ENCODE measurements at regions of chr14 and their contacts with region 1.

Region 1: GRCh38 chr14:90697577-90698206 is 118.5 kb downstream of the TTC7B start:
- DNase-seq: peak; percentile 91
- ATAC-seq: peak; percentile 92

Region 2: GRCh38 chr14:89598548-89599186 is 1099.0 kb before region 1 on chr14:
- intact Hi-C with region 1: no loop called
- DNase-seq: no peak
- ATAC-seq: no peak

Region 3: GRCh38 chr14:90301668-90302090 is 396.0 kb before region 1 on chr14:
- intact Hi-C with region 1: loop called (anchors 5 kb)
- DNase-seq: no peak
- ATAC-seq: peak; percentile 58

Region 4: DNA sequence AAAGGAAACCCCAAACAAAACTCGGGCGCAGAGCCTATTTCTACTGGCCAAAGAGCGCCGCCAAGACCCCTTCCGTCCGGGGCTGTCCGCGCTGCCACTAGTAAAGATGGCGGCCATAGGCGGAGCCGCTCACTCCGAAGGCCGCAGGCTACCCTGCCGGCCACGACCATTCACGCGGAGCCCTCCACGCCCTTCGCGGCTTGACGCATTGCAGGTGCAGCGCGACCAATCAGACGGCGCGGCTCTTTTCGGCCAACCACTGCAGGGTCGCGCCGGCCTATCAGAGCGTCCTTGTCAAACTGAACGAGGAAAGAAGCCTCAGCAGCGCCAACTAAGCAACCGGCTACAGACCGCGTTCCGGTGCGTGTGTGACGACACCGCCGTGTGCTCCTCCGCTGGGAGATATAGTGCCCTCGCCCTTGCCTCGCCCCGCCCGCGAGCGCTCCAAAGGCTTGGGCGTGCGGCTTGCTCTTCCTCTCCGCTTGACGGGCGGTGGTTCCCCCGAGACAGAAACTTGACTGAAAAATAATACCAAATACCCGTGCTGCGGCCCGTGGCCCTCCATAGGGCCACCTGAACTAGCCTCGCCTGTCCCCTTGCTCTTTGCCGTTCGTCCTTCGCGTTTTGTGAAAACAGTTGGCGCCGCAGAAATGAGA is 314.5 kb before region 1 on chr14:
- intact Hi-C with region 1: loop called (anchors 5 kb)
- DNase-seq: peak; percentile 100
- ATAC-seq: peak; percentile 95

Region 5: GRCh38 chr14:90518941-90519256 is 178.8 kb before region 1 on chr14:
- intact Hi-C with region 1: loop called (anchors 5 kb)
- DNase-seq: no peak
- ATAC-seq: no peak

Region 6: DNA sequence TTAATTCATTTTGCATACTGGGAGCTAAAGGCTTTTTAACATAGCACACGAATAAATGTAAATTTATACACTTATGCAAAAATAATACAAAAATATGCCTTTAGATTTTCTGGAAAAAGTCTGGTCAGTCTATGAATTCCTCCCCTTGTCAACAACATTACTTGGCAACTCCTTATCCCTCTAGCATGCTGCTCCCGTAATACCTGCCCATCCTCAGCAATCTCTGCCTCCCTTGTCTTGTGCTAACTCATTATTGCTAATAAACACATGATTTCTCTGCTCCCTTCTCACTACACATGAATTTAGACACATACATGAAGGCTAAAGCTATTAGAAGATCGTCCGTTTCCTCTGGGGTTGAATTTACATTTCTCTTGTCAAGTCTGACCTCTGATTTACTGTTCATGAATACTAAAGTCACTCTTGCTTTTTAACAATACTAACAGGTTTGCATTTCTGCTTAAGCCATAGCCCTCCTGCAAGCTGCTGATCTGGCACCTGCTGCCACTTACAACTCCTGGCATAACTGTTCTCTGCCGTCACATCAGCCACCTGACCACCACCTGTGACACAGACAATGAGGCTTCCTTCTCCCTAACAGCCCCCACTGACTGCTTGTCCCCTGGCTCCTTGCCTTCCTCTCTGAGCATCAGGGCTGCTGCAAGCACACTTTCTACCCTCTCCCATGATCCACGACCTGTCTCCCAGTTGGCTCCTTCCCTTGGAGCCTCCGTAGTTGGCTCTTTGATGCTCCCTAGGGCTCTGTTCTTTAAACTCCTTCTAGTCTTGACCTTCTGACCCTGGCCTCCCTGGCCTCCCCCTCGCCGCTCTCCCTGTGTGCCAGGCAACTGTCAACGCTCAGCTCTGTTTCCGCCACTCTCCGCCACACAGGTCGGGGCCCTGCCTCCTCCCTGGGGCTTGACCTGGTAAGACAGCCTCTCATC is 123.2 kb before region 1 on chr14:
- intact Hi-C with region 1: loop called (anchors 2 kb)
- DNase-seq: peak; percentile 81
- ATAC-seq: peak; percentile 82

Region 7: GRCh38 chr14:90624728-90625400 is 72.8 kb before region 1 on chr14:
- intact Hi-C with region 1: loop called (anchors 5 kb)
- DNase-seq: no peak
- ATAC-seq: no peak

Region 8: GRCh38 chr14:90726656-90727055 is 29.0 kb after region 1 on chr14:
- intact Hi-C with region 1: no loop called
- DNase-seq: no peak
- ATAC-seq: peak; percentile 32

Measured in Right ventricle myocardium inferior (tissue), 1 donor.